Activated T-helper 2 cell treated with anti-CD3 and anti-CD28 coated beads, Interferon-gamma antibody, Interleukin-2, Interleukin-4, amounts not matched to agents 10 μg/mL and 5 μg/mL and 100 μg/mL, durations not matched to agents 14 hours and 24 hours and 36 hours (primary cell): ENCODE measurements at regions of chr3 and their contacts with region 1.

Region 1: GRCh38 chr3:16290007-16290826 is 25.2 kb downstream of the OXNAD1 start:
- DNase-seq: no peak
- H3K4me3 Mint-ChIP-seq: peak overlapping the region; percentile 82
- H3K27ac Mint-ChIP-seq: peak overlapping the region; percentile 68
- H3K4me1 Mint-ChIP-seq: peaks cover 80% of the 10 kb centered on the region
- H3K27me3 Mint-ChIP-seq: no peaks in the 10 kb centered on the region

Region 2: GRCh38 chr3:16247276-16248061 is 42.7 kb before region 1 on chr3:
- intact Hi-C with region 1: no loop called
- DNase-seq: peak; percentile 67
- H3K4me3 Mint-ChIP-seq: no peak overlapping the region
- H3K27ac Mint-ChIP-seq: no peak overlapping the region
- H3K4me1 Mint-ChIP-seq: peaks cover 18% of the 10 kb centered on the region
- H3K27me3 Mint-ChIP-seq: no peaks in the 10 kb centered on the region

Region 3: DNA sequence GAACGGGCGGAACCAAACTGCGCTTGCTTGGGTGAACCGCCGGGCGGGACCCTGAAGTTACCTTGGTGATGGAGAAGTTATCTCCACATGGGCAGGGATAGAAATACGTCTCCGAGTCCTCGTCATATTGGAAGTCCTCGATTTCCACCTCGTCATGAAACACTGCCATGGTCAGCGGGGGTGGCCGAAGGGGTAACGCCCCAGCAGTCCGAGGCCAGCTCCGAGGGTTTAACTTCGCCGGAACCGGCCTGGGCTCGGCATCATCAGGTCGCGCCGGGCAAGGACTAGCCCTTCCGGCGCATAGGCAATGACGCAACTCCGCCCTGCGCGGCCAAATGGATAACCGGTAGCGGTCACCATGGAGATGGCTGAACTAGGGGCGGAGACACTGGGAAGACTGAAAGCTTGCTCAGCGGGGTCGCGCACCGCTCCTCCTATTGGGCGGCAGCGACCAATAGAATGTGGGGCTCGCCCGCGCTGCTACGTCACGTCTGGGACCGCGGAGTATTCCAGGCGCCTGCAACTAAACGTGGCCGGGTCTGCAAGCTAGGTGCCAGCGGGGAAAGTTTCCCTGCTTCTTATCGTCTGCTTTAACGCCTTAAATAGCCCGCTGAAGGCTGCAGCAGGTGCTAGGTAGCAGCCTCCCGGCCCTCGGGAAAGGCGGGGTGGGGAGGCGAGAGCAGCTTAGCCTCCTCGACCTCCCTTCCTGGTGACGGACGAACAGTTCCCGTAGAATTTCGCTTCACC is 25.3 kb before region 1 on chr3 and contains the starts of genes DPH3 and OXNAD1:
- intact Hi-C with region 1: loop called (anchors 1 kb)
- DNase-seq: peak; percentile 99
- H3K4me3 Mint-ChIP-seq: peak within 1 kb of the TSS; percentile 96
- H3K27ac Mint-ChIP-seq: peak within 1 kb of the TSS; percentile 95
- H3K4me1 Mint-ChIP-seq: peaks cover 20% of the 10 kb centered on the region
- H3K27me3 Mint-ChIP-seq: no peaks in the 10 kb centered on the region
- total RNA-seq, gene DPH3: 22.7 and 23.1 TPM in 2 replicates
- total RNA-seq, gene OXNAD1: 18.7 and 20.5 TPM in 2 replicates

Region 4: DNA sequence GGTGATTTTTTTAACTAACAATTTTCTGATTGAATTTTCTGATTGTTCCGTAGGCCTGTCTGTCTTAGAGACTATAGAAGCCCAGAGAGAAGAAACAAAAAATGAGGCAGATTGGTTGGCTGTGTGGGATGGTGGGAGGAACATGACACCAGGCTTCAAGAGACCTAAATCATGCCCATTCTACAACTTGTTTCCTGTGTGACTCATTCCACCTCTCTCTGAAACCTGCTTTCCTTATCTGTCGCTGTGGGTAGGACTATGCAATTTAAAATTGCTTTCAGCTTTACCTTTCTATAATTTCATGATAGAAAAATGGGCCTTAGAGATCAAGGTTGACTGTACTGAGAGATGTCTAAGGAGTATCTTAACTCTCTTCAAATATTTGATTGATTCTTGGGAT is 19.3 kb after region 1 on chr3:
- intact Hi-C with region 1: loop called (anchors 1 kb)
- DNase-seq: peak; percentile 56
- H3K4me3 Mint-ChIP-seq: peak overlapping the region; percentile 60
- H3K27ac Mint-ChIP-seq: peak overlapping the region; percentile 91
- H3K4me1 Mint-ChIP-seq: peaks cover 80% of the 10 kb centered on the region
- H3K27me3 Mint-ChIP-seq: no peaks in the 10 kb centered on the region

Region 5: DNA sequence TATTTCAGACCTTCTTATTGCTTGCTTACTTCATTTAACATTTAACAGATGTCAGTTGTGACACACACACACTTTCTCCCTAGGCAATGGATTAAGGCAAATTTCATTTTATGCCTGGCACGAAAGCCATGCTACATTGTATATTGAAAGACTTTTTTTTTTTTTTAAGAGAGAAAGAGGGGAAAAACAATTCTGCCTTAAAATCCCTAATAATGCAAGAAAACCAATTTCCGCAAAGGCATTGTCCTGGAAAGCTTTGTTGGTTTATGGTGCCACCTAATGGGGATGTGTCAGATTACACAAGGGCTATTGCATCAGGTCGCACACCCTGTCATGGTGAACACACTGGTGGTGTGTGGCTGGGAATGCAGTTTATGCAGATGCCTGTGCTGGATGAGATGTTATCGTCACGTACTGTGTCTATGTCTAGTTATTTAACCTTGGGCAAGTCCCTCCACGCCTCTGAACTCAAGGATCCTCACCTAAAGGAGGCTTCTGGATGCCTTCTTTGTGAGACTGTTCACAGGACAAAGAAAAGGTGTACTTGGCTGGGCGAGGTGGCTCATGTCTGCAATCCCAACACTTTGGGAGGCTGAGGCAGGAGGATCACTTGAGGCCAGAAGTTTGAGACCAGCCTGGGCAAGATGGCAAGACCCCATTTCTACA is 260.6 kb after region 1 on chr3:
- intact Hi-C with region 1: loop called (anchors 1 kb)
- DNase-seq: peak; percentile 64
- H3K4me3 Mint-ChIP-seq: no peak overlapping the region
- H3K27ac Mint-ChIP-seq: peak overlapping the region; percentile 24
- H3K4me1 Mint-ChIP-seq: peaks cover 11% of the 10 kb centered on the region
- H3K27me3 Mint-ChIP-seq: peaks cover 6% of the 10 kb centered on the region

Region 6: GRCh38 chr3:17151598-17152373 is 861.6 kb after region 1 on chr3:
- intact Hi-C with region 1: loop called (anchors 10 kb)
- DNase-seq: peak; percentile 91
- H3K4me3 Mint-ChIP-seq: peak overlapping the region; percentile 49
- H3K27ac Mint-ChIP-seq: peak overlapping the region; percentile 91
- H3K4me1 Mint-ChIP-seq: peaks cover 66% of the 10 kb centered on the region
- H3K27me3 Mint-ChIP-seq: no peaks in the 10 kb centered on the region